Activated naive CD4-positive, alpha-beta T cell treated with anti-CD3 and anti-CD28 coated beads for 36 hours (primary cell): ENCODE measurements at regions of chr6 and their contacts with region 1.

Region 1: DNA sequence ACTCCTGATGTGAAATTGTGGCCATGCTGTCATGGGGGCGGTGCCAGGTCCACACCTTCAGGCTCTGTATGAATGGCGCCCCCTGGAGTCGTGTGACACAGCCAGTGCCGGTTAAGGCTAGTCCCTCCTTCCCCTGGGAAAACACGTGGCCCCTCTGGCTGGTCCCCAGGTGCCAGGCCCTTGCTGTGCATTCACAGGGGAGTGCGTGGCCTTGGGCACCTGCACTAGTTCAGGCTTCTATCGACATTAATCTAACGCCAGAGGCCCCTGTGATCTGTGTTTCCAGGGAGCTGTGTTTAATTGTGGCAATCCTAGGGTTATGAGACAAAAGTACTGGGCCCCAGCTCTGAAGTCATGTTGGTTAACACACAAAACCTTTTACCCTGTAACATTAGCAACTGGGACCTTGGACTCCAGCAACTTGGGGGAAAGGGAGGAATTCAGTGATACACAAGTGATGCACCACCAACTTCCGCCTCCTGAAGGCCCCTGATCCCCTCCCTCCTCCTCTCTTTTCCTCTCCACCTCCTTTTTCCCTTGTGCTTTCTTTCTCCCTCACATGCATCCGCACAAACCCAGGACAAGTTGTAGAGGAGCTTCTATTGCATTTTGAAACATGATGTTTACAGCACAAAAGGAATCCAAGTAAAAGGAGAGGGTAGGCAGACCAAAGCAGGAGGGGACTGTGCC is 74.0 kb downstream of the SSR1 start:
- DNase-seq: peak; percentile 93
- H3K4me3 Mint-ChIP-seq: no peak overlapping the region
- H3K27ac Mint-ChIP-seq: peak overlapping the region; percentile 15
- H3K4me1 Mint-ChIP-seq: peaks cover 27% of the 10 kb centered on the region
- H3K27me3 Mint-ChIP-seq: no peaks in the 10 kb centered on the region

Region 2: DNA sequence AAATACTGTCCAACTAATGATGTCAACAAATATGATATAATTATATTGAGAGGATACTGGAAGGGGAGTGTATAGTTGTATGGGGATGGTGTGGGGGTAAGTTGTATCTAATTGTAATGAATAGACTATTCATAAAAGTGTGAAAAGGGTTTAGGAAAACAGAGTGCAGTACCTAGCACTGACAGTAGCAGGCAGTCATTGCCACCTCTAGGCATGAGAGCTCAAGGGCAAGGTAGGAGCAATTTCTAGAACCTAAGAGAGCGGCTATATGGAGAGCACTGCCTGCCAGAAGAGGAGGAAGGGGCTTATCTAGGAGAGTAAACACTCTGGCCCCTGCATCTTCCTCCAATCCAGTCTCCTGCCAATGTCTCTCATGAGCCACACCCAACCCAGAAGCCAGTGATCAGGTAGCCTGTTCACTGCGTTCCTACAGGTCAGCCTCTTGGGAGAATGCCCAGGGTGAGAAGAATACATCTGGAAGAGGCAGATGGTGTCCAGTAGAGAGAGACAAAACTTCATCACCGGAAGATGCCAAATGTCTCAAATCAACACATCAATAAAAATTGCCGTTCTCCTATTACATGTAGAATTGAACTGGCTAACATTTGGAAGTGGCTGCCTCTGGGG is 450.5 kb before region 1 on chr6:
- CTCF ChIA-PET with region 1: interaction called, 3 read pairs
- intact Hi-C with region 1: loop called (anchors 1 kb)
- DNase-seq: peak; percentile 61
- H3K4me3 Mint-ChIP-seq: no peak overlapping the region
- H3K27ac Mint-ChIP-seq: no peak overlapping the region
- H3K4me1 Mint-ChIP-seq: peaks cover under 1% of the 10 kb centered on the region
- H3K27me3 Mint-ChIP-seq: no peaks in the 10 kb centered on the region

Region 3: GRCh38 chr6:7172649-7173048 is 66.4 kb before region 1 on chr6:
- CTCF ChIA-PET with region 1: no interaction called
- intact Hi-C with region 1: no loop called
- DNase-seq: no peak
- H3K4me3 Mint-ChIP-seq: no peak overlapping the region
- H3K27ac Mint-ChIP-seq: no peak overlapping the region
- H3K4me1 Mint-ChIP-seq: peaks cover 28% of the 10 kb centered on the region
- H3K27me3 Mint-ChIP-seq: no peaks in the 10 kb centered on the region

Region 4: GRCh38 chr6:7742223-7742785 is 503.3 kb after region 1 on chr6:
- CTCF ChIA-PET with region 1: no interaction called
- intact Hi-C with region 1: no loop called
- DNase-seq: no peak
- H3K4me3 Mint-ChIP-seq: no peak overlapping the region
- H3K27ac Mint-ChIP-seq: no peak overlapping the region
- H3K4me1 Mint-ChIP-seq: no peaks in the 10 kb centered on the region
- H3K27me3 Mint-ChIP-seq: peaks cover 27% of the 10 kb centered on the region

Region 5: GRCh38 chr6:9197726-9198125 is 1958.7 kb after region 1 on chr6:
- CTCF ChIA-PET with region 1: no interaction called
- intact Hi-C with region 1: no loop called
- DNase-seq: no peak
- H3K4me3 Mint-ChIP-seq: no peak overlapping the region
- H3K27ac Mint-ChIP-seq: no peak overlapping the region
- H3K4me1 Mint-ChIP-seq: no peaks in the 10 kb centered on the region
- H3K27me3 Mint-ChIP-seq: no peaks in the 10 kb centered on the region